ENCODE measurements at regions of chr19 and their contacts with region 1.

Region 1: GRCh38 chr19:41398598-41398997 is 980 bp downstream of the BCKDHA start:
- DNase-seq: no peak
- ATAC-seq: no peak
- H3K4me3 ChIP-seq: peak overlapping the region; percentile 81 to 97
- H3K4me3 Mint-ChIP-seq: peak overlapping the region; percentile 97 to 99 (median 98)
- H3K27ac ChIP-seq: no peak overlapping the region
- H3K27ac Mint-ChIP-seq: peak overlapping the region; percentile 100
- H3K4me1 ChIP-seq: peaks cover 19 to 41% of the 10 kb centered on the region in 2 experiments
- H3K4me1 Mint-ChIP-seq: peaks cover 43 to 58% (median 55%) of the 10 kb centered on the region in 3 donors
- H3K27me3 ChIP-seq: no peaks in the 10 kb centered on the region
- H3K27me3 Mint-ChIP-seq: no peaks in the 10 kb centered on the region

Region 2: GRCh38 chr19:41439441-41440222 is 41.0 kb after region 1 on chr19 and contains the start of gene DMAC2:
- CTCF ChIA-PET with region 1: interaction called, 3 to 12 read pairs
- POLR2A ChIA-PET with region 1: no interaction called
- DNase-seq: peak; percentile 82 to 98 (median 93)
- ATAC-seq: peak; percentile 98 to 99 (median 99)
- H3K4me3 ChIP-seq: peak within 1 kb of the TSS; percentile 92 to 96
- H3K4me3 Mint-ChIP-seq: no peak within 1 kb of the TSS
- H3K27ac ChIP-seq: peak within 1 kb of the TSS; percentile 78
- H3K27ac Mint-ChIP-seq: peak within 1 kb of the TSS; percentile 5 to 14
- H3K4me1 ChIP-seq: peaks cover 5 to 15% of the 10 kb centered on the region in 2 experiments
- H3K4me1 Mint-ChIP-seq: peaks cover 0 to 19% (median 8%) of the 10 kb centered on the region in 3 donors
- H3K27me3 ChIP-seq: peaks cover 0 to 5% of the 10 kb centered on the region in 2 experiments
- H3K27me3 Mint-ChIP-seq: peaks cover 0 to 2% of the 10 kb centered on the region in 2 donors
- total RNA-seq, gene DMAC2: 19.5 to 33.9 (median 24.7) TPM